GM10248 (cell line): ENCODE measurements at regions of chr11 and their contacts with region 1.

Region 1: GRCh38 chr11:64304316-64305072 is 830 bp upstream of the ESRRA start:
- DNase-seq: peak; percentile 86
- CTCF ChIP-seq: peak; percentile 90

Region 2: DNA sequence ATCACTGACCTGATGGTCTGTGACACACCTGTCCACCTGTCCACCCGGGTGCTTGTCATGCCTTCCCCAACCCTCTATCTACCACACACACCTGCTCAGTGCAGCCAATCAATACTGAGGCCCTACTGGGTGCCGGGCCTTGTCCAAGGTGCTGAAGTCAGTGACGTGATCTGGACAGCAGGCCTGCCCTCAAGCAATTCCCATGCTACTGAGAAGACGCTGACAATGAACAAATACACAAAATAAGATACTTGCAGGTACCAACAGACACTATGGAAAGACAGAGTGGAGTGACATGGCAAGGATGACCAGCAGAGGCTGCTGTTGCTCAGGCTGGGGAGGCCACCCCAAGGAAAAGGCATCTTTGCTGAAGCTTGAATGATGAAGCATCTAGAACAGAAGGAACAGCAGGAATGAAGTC is 711.5 kb before region 1 on chr11:
- CTCF ChIA-PET with region 1: no interaction called
- POLR2A ChIA-PET with region 1: no interaction called
- DNase-seq: no peak
- CTCF ChIP-seq: peak; percentile 63

Region 3: DNA sequence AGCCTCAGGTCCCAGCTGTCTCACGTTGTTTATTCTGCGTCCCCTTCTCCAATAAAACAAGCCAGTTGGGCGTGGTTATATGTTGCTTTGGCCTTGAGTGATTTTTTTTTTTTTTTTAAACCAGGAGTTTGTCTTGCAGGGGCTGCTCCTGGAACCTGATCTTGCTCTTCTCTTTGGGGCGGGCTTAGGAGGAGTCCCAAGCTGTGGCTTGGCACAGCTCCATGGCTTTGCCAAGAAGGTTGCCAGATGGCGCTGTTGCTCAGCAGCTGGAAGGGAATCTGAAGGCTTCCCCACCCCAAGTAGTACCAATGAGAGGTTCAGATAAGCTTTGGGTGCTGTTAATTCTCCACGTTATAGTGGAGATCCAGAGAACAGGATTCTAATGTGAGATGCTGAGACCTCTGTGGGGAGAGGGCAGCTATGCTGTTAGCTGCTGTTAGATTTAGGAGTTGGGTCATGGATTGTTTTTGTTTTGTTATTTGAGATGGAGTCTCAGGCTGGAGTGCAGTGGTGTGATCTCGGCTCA is 100.0 kb before region 1 on chr11:
- CTCF ChIA-PET with region 1: interaction called, 219 read pairs
- POLR2A ChIA-PET with region 1: interaction called, 8 read pairs
- DNase-seq: peak; percentile 83
- CTCF ChIP-seq: peak; percentile 84

Region 4: GRCh38 chr11:64225612-64226506 is 78.6 kb before region 1 on chr11 and contains the starts of genes NUDT22 and TRPT1:
- CTCF ChIA-PET with region 1: interaction called, 11 read pairs
- POLR2A ChIA-PET with region 1: no interaction called
- DNase-seq: peak; percentile 93
- CTCF ChIP-seq: peak; percentile 22

Region 5: DNA sequence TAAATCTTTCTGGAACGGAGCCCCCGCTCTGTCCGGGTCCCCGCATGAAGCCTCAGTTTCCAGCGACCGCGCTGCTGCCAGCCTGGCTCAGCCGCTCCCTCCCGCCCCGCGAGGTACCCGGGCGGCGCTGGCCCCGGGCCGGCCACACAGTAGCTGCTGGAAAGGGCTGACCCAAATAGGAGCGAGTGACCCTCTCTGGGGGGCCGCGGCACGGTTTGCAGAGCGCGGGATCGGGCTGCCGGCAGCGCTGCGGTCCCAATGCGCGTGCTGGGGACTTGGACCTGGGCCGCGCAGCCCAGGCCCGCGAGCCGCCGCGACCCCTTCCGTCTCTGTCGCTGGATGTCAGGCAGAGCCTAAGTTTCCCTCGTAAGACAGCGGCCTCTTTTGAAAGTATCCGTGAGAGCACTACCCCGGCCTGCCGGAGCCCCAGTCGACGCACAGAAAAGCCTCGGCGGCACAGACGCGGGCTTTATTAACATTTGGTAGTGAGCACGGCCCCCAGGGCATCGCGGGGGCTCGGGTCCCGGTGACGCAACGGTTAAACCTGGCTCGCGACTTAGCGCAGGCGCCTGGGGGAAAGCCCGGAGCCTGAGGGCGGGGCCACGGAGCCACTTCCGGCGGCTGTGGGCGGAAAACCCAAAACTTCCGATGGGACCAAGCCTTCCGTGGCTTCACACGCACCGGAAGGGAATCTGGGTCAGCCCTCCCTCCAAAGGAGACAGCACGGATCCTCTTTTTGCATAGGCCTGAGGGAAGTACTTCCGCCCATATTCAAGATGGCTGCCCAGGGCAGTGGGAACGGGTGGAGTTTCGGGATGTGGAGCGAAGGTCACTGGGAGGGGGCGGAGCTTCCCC is 34.9 kb before region 1 on chr11:
- CTCF ChIA-PET with region 1: interaction called, 164 read pairs
- POLR2A ChIA-PET with region 1: interaction called, 3 read pairs
- DNase-seq: peak; percentile 91
- CTCF ChIP-seq: no peak

Region 6: DNA sequence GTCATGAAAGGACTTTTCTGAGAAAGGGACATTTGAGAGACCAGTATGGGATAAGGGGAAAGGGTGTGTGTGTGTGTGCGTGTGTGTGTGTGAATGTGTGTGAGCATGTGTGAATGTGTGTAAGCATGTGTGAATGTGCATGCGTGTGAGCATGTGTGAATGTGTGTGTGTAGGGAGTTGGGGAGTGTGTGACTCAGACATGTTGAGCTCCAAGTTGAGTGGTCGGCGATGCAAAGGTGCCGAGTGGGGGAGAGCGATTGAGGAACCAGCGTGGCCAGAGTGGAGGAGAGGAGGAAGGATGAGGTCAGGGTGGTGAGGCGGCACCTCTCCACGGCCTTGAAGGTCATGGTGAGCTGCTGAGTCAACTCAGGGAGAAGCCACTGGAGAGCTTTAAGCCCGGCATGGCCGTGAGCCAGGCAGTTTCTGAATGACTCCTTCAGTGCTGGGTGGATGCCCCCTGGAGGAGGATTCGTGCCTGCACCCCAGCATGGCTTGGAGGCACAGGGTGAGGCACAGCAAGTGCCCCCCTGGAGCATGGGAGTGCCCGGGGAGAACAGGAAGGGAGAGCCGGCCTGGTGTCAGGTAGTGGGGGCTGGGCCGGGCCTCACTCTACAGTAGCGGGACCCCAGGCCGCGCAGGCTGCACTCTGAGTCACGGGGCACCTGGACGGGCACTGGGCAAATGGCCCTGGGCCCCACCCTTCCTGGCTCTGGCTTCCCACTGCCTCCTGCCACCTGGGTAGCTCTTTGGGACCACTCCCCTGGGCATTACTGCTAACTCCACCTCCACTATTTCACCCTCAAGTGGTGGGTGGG is 27.3 kb after region 1 on chr11:
- CTCF ChIA-PET with region 1: interaction called, 20 read pairs
- POLR2A ChIA-PET with region 1: no interaction called
- DNase-seq: peak; percentile 79
- CTCF ChIP-seq: peak; percentile 56

Region 7: DNA sequence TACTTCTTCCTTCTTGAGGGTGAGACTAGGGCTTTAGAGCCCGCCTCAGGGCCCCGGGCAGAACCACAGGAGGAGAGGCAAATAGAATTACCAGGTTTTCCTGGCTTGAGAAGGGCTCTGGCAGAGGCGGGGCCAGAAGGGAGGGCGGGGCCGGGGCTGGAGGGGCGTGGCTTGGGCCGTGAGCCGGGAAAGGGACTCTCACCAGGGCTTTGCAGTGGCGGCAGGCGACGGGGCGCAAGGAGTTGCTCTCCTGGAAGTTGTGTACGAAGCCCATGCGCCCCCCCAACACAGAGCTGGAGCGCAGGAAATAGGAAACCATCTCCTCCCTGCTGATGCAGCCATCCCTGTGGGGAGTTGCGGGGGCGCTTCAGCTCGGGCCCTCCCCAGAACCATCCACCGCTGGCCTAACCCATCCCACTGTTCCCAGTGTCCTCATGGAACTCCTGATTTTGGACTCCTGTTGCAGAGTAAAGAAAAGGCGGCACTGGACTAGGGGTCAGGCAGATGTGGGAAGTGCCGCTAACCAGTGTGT is 425.4 kb after region 1 on chr11:
- CTCF ChIA-PET with region 1: no interaction called
- POLR2A ChIA-PET with region 1: no interaction called
- DNase-seq: no peak
- CTCF ChIP-seq: no peak

Region 8: GRCh38 chr11:65791691-65792213 is 1487.3 kb after region 1 on chr11:
- CTCF ChIA-PET with region 1: no interaction called
- POLR2A ChIA-PET with region 1: no interaction called
- DNase-seq: peak; percentile 82
- CTCF ChIP-seq: no peak